Activated T-helper 1 cell treated with anti-CD3 and anti-CD28 coated beads, Interleukin-12 subunit alpha, Interleukin-12 subunit beta, Interleukin-2, Interleukin-4 antibody, amounts not matched to agents 30 ng/mL and 10 ng/mL and 1 ng/mL, durations not matched to agents 14 hours and 24 hours and 36 hours (primary cell): ENCODE measurements at regions of chr9 and their contacts with region 1.

Region 1: DNA sequence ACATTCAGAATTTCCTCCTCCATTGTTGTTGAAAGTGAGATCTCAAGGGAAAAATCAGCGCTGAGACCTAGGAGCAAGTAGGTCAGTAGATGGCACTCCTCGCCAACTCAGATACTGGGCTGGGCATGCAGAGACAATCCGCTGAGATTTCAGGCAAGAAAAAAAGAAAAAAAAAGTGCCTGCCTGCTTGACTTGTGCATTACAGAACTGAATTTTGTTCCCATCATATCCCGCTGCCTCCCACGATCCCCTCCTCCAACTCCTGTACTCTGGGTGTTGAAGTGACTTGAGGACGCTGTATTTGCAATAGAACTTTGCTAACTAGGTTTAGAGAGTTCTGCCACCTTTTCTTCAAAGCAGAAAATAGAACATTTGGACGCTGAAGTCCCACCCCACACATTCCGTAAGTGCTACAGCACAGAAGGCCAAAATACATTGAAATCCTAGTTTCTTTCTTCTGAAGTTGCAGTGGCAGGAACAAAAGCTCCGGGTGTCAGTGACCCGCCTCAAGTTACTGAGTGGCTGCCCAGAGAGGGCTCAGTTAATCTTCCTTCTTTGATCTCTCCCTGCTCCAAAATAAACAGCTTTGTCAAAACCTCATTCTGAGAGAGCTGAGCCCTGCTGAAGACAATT is 265.8 kb downstream of the MLLT3 start:
- DNase-seq: peak; percentile 29
- H3K4me3 Mint-ChIP-seq: no peak overlapping the region
- H3K27ac Mint-ChIP-seq: peak overlapping the region; percentile 40
- H3K4me1 Mint-ChIP-seq: peaks cover 86% of the 10 kb centered on the region
- H3K27me3 Mint-ChIP-seq: no peaks in the 10 kb centered on the region

Region 2: DNA sequence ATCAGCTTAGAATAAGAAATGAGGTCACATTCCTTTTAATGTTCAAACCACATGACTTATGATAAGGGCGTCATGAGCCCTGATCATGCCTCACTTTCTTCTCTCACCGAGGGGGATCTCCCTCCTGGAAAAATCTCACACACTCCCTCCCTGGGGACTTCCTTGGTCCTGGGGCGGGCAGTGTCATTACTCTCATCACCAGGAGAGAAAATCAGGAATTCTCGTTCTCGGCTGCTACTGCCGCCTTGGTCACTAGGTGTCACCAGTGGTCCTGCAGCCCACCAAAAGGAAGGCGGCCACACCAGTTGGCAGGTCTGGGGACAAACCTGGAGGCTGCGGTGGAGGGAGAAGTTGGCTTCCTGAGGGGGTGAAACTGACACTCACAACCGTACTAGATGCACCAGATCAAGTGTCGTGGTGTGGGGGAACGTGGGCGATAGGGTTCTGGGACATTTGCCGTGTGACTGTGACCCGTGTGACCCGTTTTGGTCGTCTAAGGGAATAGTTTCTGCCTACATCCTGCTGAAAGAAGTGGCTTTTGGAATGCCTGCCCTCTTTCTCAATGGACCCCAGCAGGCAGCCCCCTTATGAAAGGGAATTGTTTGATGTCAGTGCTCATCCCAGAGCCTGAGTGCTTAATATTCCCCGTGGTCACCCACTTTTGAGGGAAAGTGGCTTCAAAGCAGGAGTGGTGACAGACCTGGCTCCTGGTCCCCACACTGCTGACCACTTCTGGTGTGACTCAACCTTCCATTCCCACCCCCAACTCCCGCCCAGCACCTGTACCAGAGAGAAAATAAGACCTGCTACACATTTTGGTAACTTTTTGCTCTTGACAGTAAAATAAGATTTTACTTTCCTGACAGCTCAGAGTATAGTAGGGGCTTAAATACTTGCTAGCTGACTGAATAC is 884.5 kb before region 1 on chr9:
- intact Hi-C with region 1: loop called (anchors 2 kb)
- DNase-seq: no peak
- H3K4me3 Mint-ChIP-seq: no peak overlapping the region
- H3K27ac Mint-ChIP-seq: peak overlapping the region; percentile 4
- H3K4me1 Mint-ChIP-seq: peaks cover 19% of the 10 kb centered on the region
- H3K27me3 Mint-ChIP-seq: peaks cover 15% of the 10 kb centered on the region

Region 3: GRCh38 chr9:19999491-20000057 is 356.9 kb before region 1 on chr9:
- intact Hi-C with region 1: loop called (anchors 1 kb)
- DNase-seq: peak; percentile 62
- H3K4me3 Mint-ChIP-seq: peak overlapping the region; percentile 63
- H3K27ac Mint-ChIP-seq: peak overlapping the region; percentile 99
- H3K4me1 Mint-ChIP-seq: peaks cover 66% of the 10 kb centered on the region
- H3K27me3 Mint-ChIP-seq: no peaks in the 10 kb centered on the region

Region 4: DNA sequence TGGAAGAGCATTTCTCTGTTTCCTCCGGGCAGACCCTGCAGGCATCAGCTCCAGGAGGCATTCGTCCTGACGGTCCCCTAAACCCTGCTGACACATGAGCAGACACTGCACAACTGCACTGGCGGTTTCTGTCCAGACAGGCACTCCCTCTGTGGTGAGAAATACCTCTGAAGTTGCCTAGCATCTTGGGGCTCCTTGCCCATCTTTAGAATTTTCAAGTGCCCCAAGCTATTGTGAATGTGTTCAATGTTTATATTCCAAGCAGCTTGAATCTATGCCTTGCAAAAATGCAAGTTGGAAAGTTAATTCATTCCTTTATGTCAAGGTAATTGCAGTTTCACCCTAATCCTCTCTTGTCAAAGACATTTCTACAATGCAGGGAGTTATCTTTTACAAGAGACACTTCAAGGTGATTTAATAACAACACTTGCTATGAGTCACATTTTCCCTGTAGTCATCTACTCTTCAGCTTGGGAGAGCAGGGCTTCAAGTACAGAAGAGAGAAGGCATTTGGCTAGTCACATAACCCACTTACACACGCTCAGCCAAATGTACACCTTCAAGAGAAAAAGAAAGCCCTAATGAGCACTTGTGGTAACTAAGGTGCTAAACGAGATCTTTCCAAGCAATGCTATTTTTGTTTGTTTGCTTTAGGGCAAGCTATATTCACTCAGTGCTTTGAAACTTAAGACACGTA is 36.7 kb before region 1 on chr9:
- intact Hi-C with region 1: loop called (anchors 1 kb)
- DNase-seq: peak; percentile 37
- H3K4me3 Mint-ChIP-seq: peak overlapping the region; percentile 35
- H3K27ac Mint-ChIP-seq: peak overlapping the region; percentile 91
- H3K4me1 Mint-ChIP-seq: peaks cover 91% of the 10 kb centered on the region
- H3K27me3 Mint-ChIP-seq: no peaks in the 10 kb centered on the region

Region 5: GRCh38 chr9:20552874-20553575 is 196.5 kb after region 1 on chr9:
- intact Hi-C with region 1: loop called (anchors 1 kb)
- DNase-seq: peak; percentile 1
- H3K4me3 Mint-ChIP-seq: peak overlapping the region; percentile 59
- H3K27ac Mint-ChIP-seq: peak overlapping the region; percentile 64
- H3K4me1 Mint-ChIP-seq: peaks cover 76% of the 10 kb centered on the region
- H3K27me3 Mint-ChIP-seq: no peaks in the 10 kb centered on the region

Region 6: GRCh38 chr9:20662156-20662555 is 305.6 kb after region 1 on chr9:
- intact Hi-C with region 1: no loop called
- DNase-seq: no peak
- H3K4me3 Mint-ChIP-seq: no peak overlapping the region
- H3K27ac Mint-ChIP-seq: no peak overlapping the region
- H3K4me1 Mint-ChIP-seq: no peaks in the 10 kb centered on the region
- H3K27me3 Mint-ChIP-seq: peaks cover 9% of the 10 kb centered on the region

Region 7: GRCh38 chr9:20941174-20941690 is 584.7 kb after region 1 on chr9:
- intact Hi-C with region 1: loop called (anchors 1 kb)
- DNase-seq: peak; percentile 28
- H3K4me3 Mint-ChIP-seq: no peak overlapping the region
- H3K27ac Mint-ChIP-seq: no peak overlapping the region
- H3K4me1 Mint-ChIP-seq: peaks cover 7% of the 10 kb centered on the region
- H3K27me3 Mint-ChIP-seq: no peaks in the 10 kb centered on the region

Region 8: GRCh38 chr9:20980832-20981455 is 624.4 kb after region 1 on chr9:
- intact Hi-C with region 1: no loop called
- DNase-seq: no peak
- H3K4me3 Mint-ChIP-seq: no peak overlapping the region
- H3K27ac Mint-ChIP-seq: no peak overlapping the region
- H3K4me1 Mint-ChIP-seq: no peaks in the 10 kb centered on the region
- H3K27me3 Mint-ChIP-seq: no peaks in the 10 kb centered on the region

Region 9: DNA sequence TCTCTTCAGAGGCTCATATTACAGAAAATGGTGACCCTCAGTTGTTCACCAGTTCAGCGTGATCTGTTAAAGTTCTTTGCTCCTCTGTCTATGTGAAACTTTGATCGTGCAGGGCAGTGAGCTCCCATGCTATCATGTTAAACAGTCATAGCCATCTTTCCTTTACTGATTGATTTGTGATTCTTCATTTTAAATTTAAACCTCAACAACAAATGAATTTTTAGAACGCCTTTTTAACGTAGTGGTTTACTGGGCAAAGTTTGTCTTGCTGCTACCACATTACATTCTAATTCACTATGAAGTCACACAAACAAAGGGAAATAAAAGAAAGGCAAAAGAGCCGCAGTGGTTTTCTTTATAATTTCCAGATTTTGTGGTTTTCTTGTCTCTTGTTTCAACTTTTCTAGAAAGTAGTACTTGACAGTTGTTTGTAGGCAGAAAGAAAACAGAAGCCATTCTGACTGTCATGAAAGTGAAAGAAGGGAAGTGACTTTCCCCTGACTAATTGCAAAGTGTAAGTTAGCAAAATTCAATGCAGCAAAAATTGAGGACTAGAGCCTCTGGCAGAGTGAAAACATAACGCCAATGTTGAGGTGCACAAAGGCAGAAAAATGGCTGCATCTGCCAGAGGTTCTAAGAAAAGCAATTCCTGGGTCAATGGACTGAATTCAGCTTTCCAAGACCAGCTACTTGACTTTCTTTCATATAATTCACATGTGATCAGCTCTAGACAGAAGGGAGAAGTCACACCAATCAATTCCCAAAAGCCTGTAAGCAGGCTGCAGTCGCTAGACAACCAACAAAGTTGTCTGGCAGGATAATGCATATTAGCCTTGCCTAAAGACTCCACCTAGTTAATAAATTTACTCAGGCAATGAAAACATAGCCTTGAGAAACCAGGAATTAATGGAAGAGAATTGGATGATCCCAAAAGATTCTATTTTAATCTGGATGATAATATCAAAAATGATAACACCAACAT is 1001.3 kb after region 1 on chr9:
- intact Hi-C with region 1: loop called (anchors 1 kb)
- DNase-seq: no peak
- H3K4me3 Mint-ChIP-seq: peak overlapping the region; percentile 56
- H3K27ac Mint-ChIP-seq: peak overlapping the region; percentile 68
- H3K4me1 Mint-ChIP-seq: peaks cover 14% of the 10 kb centered on the region
- H3K27me3 Mint-ChIP-seq: peaks cover 57% of the 10 kb centered on the region